ENCODE measurements at regions of chr5 and their contacts with region 1.

Region 1: GRCh38 chr5:157253547-157253946 is 12.4 kb upstream of the CYFIP2 start:
- H3K4me3 ChIP-seq: no peak overlapping the region
- H3K27ac ChIP-seq: no peak overlapping the region
- H3K4me1 ChIP-seq: no peaks in the 10 kb centered on the region
- CTCF ChIP-seq: no peak

Region 2: DNA sequence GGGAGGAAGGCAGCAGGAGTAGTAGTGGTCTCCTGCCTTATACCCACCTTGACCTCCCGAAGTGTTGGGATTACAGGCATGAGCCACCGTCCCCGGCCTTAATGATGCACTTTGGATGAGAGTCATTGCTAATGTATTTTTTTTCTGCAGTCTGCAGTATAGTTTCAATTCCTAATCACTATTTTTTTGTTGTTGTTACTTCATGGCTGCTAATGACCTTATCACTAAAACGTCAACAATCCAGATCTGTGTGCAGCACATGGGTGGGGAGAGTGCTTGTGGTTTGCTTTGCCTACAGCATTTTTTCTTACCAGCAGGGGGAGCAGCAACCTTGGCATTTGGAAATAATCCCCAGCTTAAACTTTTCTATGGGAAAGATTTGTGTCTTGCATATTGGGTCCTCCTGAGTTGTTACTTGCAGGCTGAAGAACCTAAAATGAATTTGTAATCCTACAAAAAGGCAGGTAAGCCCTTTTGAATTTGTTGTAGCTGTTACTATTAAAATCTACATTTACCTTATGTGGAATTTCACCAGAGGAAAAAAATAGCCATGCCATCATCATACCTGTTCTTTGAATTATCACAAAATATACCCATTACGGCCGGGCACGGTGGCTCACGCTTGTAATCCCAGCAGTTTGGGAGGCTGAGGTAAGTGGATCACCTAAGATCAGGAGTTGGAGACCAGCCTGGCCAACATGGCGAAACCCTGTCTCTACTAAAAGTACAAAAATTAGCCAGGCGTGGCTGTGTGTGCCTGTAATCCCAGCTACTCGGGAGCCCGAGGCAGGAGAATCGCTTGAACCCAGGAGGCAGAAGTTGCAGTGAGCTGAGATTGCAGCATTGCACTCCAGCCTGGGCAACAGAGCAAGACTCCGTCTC is 104.6 kb before region 1 on chr5:
- CTCF ChIA-PET with region 1: interaction called, 12 read pairs
- POLR2A ChIA-PET with region 1: no interaction called
- H3K4me3 ChIP-seq: no peak overlapping the region
- H3K27ac ChIP-seq: no peak overlapping the region
- H3K4me1 ChIP-seq: no peaks in the 10 kb centered on the region
- CTCF ChIP-seq: no peak

Region 3: DNA sequence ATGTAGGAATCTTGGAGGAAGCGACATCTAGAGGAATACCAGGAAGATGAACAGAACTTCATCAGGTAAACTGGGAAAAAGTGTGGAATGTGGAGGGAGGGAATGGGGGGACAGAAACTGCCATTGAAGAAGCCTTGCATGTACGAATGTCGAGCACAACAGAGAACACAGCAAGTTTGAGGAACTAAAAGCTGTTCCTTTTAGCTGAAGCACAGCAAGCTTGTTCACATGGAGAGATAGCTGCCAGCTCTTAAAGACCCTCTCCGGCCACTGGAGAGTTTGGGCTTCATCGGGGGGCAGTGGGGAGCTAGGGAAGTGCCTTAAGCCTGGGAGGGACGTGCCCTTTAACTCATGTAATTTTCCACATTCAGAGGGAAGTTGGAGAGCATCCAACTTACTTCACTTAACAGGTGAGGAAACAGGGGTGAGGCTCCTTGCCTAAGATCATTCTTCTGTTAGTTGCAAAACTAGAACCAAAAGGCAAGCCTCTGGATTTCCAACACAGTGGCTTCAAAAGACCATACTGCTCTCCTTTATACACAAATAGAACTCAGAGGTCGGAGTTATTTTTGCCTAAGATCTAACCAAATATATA is 10.0 kb after region 1 on chr5:
- CTCF ChIA-PET with region 1: interaction called, 35 read pairs
- POLR2A ChIA-PET with region 1: no interaction called
- H3K4me3 ChIP-seq: no peak overlapping the region
- H3K27ac ChIP-seq: no peak overlapping the region
- H3K4me1 ChIP-seq: peaks cover 15% of the 10 kb centered on the region
- CTCF ChIP-seq: no peak

Region 4: DNA sequence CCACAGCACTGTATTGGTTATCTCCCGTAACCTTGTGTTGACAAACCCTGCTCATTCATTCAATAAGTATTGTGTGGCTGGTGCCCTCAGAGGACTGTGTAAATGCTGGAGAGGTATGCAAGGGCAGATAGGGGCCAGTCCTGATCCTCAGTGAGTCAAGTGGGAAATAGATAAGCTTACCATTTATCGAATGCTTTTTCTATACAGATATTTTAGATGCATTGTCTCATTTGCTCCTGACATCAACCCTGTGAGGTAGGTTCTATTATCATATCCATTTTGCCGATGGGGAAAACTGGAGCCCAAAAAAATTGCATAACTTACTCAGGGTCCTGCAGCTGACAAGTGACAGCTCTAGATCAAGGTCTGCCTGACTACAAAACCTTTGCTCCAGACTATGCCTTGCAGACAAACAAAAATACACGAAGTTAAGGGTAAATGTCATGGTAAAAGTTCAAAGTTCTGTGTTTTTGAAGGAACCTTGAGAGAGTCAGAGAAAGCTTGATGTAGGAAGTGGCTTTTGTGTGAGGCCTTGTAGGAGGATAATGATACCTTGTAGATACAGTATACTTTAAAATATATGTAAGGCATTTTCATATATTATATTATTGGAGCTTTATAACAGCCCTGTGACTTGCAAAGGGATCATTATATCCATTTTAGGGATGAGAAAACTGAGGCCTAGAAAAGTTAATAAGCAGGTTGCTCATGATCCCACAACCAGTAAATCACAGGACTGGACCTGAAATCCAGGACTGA is 35.0 kb after region 1 on chr5:
- CTCF ChIA-PET with region 1: interaction called, 11 read pairs
- POLR2A ChIA-PET with region 1: no interaction called
- H3K4me3 ChIP-seq: no peak overlapping the region
- H3K27ac ChIP-seq: no peak overlapping the region
- H3K4me1 ChIP-seq: no peaks in the 10 kb centered on the region
- CTCF ChIP-seq: no peak

Region 5: GRCh38 chr5:157312492-157312891 is 58.9 kb after region 1 on chr5:
- CTCF ChIA-PET with region 1: interaction called, 34 read pairs
- POLR2A ChIA-PET with region 1: no interaction called
- H3K4me3 ChIP-seq: no peak overlapping the region
- H3K27ac ChIP-seq: no peak overlapping the region
- H3K4me1 ChIP-seq: no peaks in the 10 kb centered on the region
- CTCF ChIP-seq: peak; percentile 33

Region 6: GRCh38 chr5:157328277-157328912 is 74.8 kb after region 1 on chr5:
- CTCF ChIA-PET with region 1: interaction called, 13 read pairs
- POLR2A ChIA-PET with region 1: no interaction called
- H3K4me3 ChIP-seq: no peak overlapping the region
- H3K27ac ChIP-seq: no peak overlapping the region
- H3K4me1 ChIP-seq: no peaks in the 10 kb centered on the region
- CTCF ChIP-seq: peak; percentile 79

Measured in HEK293 (cell line).